ENCODE measurements at regions of chr2 and their contacts with region 1.

Region 1: GRCh38 chr2:232927793-232928550 is 57.9 kb downstream of the SNORC start:
- DNase-seq: no peak
- ATAC-seq: peak; percentile 74
- H3K4me3 ChIP-seq: peak overlapping the region; percentile 46 to 61
- H3K27ac ChIP-seq: no peak overlapping the region
- H3K4me1 ChIP-seq: peaks cover 5% of the 10 kb centered on the region; the same call in 1 of the 2 replicates
- H3K27me3 ChIP-seq: no peaks in the 10 kb centered on the region
- CTCF ChIP-seq: no peak

Region 2: GRCh38 chr2:232951891-232952290 is 23.9 kb after region 1 on chr2:
- CTCF ChIA-PET with region 1: no interaction called
- POLR2A ChIA-PET with region 1: interaction called, 10 read pairs
- in situ Hi-C with region 1: no loop called
- intact Hi-C with region 1: no loop called
- DNase-seq: no peak
- ATAC-seq: no peak
- H3K4me3 ChIP-seq: no peak overlapping the region
- H3K27ac ChIP-seq: no peak overlapping the region
- H3K4me1 ChIP-seq: peaks cover 8% of the 10 kb centered on the region
- H3K27me3 ChIP-seq: no peaks in the 10 kb centered on the region
- CTCF ChIP-seq: no peak

Measured in Panc1 (cell line).